ENCODE measurements at regions of chr5 and their contacts with region 1.

Region 1: GRCh38 chr5:59810041-59810440 is 83.5 kb downstream of the PDE4D start:
- DNase-seq: peak; percentile 81 to 92
- ATAC-seq: peak; percentile 77
- H3K4me3 ChIP-seq: peak overlapping the region in 1 of 2 donors; percentile 63
- H3K27ac ChIP-seq: no peak overlapping the region
- H3K4me1 ChIP-seq: peaks cover 0 to 3% of the 10 kb centered on the region in 2 donors
- H3K27me3 ChIP-seq: no peaks in the 10 kb centered on the region

Region 2: DNA sequence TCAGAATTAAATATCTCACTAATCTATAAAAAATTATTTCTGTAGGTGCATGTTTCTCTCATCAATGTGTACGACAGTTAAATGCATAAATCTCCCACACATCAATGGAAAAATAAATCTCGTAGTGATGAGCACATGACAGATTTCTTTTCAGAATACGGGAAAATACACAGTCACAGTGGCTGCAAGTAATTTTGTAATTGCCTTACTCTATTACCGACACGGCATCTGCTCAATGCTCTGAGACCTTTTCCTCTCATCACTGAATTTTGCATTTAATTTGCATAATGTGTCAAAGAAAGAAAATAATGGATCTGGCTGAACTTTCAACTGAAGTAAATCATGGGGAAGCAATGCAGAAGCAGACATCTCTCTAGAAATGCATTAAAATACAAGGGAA is 46.3 kb after region 1 on chr5:
- intact Hi-C with region 1: no loop called
- DNase-seq: no peak
- ATAC-seq: no peak
- H3K4me3 ChIP-seq: no peak overlapping the region
- H3K27ac ChIP-seq: no peak overlapping the region
- H3K4me1 ChIP-seq: no peaks in the 10 kb centered on the region
- H3K27me3 ChIP-seq: no peaks in the 10 kb centered on the region

Region 3: GRCh38 chr5:60259730-60260129 is 449.7 kb after region 1 on chr5:
- intact Hi-C with region 1: loop called in 1 of 2 experiments (anchors 10 kb)
- DNase-seq: no peak
- ATAC-seq: no peak
- H3K4me3 ChIP-seq: no peak overlapping the region
- H3K27ac ChIP-seq: no peak overlapping the region
- H3K4me1 ChIP-seq: peaks cover 0 to 4% of the 10 kb centered on the region in 2 donors
- H3K27me3 ChIP-seq: no peaks in the 10 kb centered on the region

Region 4: DNA sequence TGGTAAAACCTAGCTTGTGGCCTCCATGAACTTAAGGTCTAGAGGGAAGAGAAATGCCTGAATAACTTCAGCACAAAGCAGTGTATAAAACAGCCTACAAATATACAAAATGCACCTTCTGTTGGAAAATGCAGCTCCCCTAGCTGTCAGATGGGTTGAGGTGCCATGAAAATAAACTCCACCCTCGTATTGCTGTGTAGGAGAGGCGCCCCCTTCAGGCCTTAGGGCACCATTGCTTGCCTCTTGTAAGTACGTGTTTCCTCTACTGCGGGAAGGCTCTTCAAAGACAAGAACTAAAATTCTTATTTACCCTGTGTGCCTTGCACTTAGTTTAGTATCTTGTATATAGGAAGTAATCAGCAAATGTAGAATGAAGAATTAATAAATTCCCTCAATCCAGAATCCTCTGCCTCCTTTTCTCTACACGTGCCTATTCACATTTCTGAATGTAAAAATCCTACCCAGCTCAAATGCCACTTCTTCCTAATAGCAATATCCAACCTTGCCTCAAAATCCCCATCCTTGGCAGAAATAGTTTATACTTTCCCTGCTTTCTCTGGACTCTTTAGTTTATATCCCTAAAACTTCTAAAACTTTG is 477.2 kb after region 1 on chr5:
- intact Hi-C with region 1: loop called in 1 of 2 experiments (anchors 10 kb)
- DNase-seq: peak in 1 of 2 donors; percentile 61
- ATAC-seq: no peak
- H3K4me3 ChIP-seq: no peak overlapping the region
- H3K27ac ChIP-seq: no peak overlapping the region
- H3K4me1 ChIP-seq: no peaks in the 10 kb centered on the region
- H3K27me3 ChIP-seq: no peaks in the 10 kb centered on the region

Region 5: DNA sequence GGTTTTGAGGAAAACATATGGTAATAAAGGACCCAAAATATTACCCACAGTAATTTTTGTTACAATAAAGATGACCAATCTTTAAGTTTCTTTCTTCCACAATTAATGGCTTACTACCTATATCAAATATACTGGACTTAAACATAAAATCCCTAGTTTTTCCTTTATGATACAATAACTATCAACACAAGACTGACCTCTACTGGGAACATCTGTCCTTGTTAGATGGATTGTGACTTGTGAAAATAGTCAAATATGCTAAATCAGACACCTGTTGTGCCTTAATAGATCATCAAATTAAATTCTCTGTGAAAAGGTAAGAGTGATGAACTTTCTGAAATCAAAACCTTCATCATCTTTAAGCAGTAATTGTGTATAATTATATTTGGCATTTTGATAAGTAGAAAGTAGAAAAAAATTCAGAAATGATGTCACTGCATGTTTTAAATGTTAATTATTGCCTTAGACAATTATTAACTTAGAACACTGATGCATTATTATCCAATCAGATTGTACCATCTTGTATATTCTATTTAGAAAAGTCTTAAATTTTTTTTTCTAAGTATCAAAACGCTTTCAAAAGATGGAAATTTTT is 776.4 kb after region 1 on chr5:
- intact Hi-C with region 1: loop called (anchors 5 kb)
- DNase-seq: no peak
- ATAC-seq: no peak
- H3K4me3 ChIP-seq: no peak overlapping the region
- H3K27ac ChIP-seq: no peak overlapping the region
- H3K4me1 ChIP-seq: no peaks in the 10 kb centered on the region
- H3K27me3 ChIP-seq: no peaks in the 10 kb centered on the region

Region 6: DNA sequence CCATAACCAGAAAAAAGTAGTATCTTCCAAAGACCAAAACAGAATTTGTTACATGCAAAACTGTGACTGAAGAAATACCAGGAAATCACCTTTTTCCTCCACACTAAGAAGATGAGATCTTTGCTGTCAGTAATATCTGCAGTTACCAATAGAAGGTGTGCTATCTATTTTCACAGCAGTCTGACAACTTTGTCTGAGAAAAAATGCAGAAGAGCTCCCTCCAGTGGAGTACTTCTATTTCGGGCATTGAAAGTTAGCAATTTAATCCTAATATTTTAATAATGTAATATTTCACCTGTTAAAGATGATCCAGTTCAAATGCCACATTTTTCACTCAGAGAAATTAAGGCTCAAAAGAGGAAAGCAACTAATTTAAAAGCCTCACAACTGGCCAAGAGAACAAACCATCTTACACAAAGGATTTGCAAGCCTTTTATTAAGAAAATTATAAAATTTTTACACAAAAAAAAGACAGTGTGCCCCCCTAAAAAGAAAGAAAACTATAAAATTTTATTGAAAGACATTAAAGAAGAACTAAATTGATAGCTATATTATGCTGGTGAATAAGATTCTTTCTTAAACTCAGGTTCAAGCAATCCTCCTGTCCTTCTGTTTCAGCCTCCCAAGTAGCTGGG is 839.4 kb after region 1 on chr5:
- intact Hi-C with region 1: loop called in 1 of 2 experiments (anchors 5 kb)
- DNase-seq: no peak
- ATAC-seq: no peak
- H3K4me3 ChIP-seq: no peak overlapping the region
- H3K27ac ChIP-seq: no peak overlapping the region
- H3K4me1 ChIP-seq: peaks cover 0 to 4% of the 10 kb centered on the region in 2 donors
- H3K27me3 ChIP-seq: no peaks in the 10 kb centered on the region

Region 7: DNA sequence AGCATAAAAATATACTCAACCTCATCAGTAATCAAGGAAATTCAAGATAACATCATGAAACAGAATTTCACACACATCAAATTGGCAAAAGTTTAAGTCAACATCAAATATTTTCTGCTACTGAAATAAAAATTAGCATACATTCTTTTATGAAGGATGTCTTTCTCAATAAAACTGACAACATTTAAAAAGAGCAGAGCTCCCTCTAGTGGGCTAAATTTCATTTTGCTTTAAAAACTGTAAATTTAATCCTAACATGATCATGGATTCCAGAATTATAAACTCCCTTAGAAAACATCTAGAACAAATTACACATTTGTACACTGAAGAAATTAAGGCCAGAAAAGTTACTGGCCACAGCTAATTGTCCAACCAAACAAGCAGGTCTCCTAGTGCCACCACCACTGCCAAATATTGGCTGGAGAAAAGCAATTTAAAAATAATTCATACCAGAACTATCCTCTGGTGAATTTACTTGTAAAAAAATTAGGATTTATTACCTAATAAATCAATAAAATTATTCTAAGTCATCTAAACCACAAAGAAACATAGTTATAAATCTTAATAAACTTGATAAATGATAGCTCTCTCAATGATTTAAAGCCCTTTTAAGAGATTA is 858.8 kb after region 1 on chr5:
- intact Hi-C with region 1: loop called (anchors 5 kb)
- DNase-seq: no peak
- ATAC-seq: no peak
- H3K4me3 ChIP-seq: no peak overlapping the region
- H3K27ac ChIP-seq: no peak overlapping the region
- H3K4me1 ChIP-seq: no peaks in the 10 kb centered on the region
- H3K27me3 ChIP-seq: no peaks in the 10 kb centered on the region